Activated T-helper 1 cell treated with anti-CD3 and anti-CD28 coated beads, Interleukin-12 subunit alpha, Interleukin-12 subunit beta, Interleukin-2, Interleukin-4 antibody, amounts not matched to agents 30 ng/mL and 10 ng/mL and 1 ng/mL, durations not matched to agents 14 hours and 24 hours and 36 hours (primary cell): ENCODE measurements at regions of chr13 and their contacts with region 1.

Region 1: GRCh38 chr13:96020155-96020575 is 33.0 kb downstream of the UGGT2 start:
- DNase-seq: no peak
- H3K4me3 Mint-ChIP-seq: no peak overlapping the region
- H3K27ac Mint-ChIP-seq: no peak overlapping the region
- H3K4me1 Mint-ChIP-seq: no peaks in the 10 kb centered on the region
- H3K27me3 Mint-ChIP-seq: no peaks in the 10 kb centered on the region

Region 2: GRCh38 chr13:95906999-95907398 is 113.2 kb before region 1 on chr13:
- intact Hi-C with region 1: no loop called
- DNase-seq: no peak
- H3K4me3 Mint-ChIP-seq: no peak overlapping the region
- H3K27ac Mint-ChIP-seq: no peak overlapping the region
- H3K4me1 Mint-ChIP-seq: no peaks in the 10 kb centered on the region
- H3K27me3 Mint-ChIP-seq: no peaks in the 10 kb centered on the region

Region 3: DNA sequence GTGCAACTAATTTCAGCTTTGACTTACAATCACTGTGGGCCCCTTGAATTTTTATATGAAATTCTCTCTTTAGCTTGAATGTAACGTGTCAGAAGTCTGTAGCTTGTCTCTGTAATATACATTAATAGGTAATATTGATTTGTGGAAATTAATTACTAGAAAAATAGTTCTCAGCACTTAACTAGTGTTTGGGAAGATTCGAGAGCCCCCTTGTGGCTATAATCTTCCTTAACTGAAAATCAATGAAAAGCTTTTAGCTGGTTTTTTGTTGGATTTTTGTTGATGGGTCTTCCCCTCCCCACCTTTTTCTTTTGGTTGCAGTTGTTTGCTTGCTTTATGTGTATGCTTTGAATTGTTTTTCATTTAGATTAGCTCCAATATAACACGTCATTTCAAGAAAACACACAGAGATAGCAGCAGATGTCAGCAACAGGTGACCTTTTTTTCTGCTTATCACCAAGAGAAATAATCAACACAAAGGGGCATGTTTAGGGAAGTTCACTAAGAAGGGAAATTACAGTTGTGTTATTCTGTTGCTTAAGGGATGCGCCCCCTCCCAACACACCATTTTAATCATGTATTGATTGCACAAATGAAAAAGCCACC is 797.3 kb after region 1 on chr13:
- intact Hi-C with region 1: loop called (anchors 5 kb)
- DNase-seq: no peak
- H3K4me3 Mint-ChIP-seq: no peak overlapping the region
- H3K27ac Mint-ChIP-seq: no peak overlapping the region
- H3K4me1 Mint-ChIP-seq: no peaks in the 10 kb centered on the region
- H3K27me3 Mint-ChIP-seq: no peaks in the 10 kb centered on the region

Region 4: GRCh38 chr13:96958286-96958891 is 938.2 kb after region 1 on chr13:
- intact Hi-C with region 1: loop called (anchors 2 kb)
- DNase-seq: no peak
- H3K4me3 Mint-ChIP-seq: no peak overlapping the region
- H3K27ac Mint-ChIP-seq: no peak overlapping the region
- H3K4me1 Mint-ChIP-seq: no peaks in the 10 kb centered on the region
- H3K27me3 Mint-ChIP-seq: peaks cover 1% of the 10 kb centered on the region